ENCODE measurements at regions of chr7 and their contacts with region 1.

Region 1: GRCh38 chr7:111763221-111763801 is 201.0 kb upstream of the IMMP2L start:
- DNase-seq: no peak
- H3K4me3 ChIP-seq: no peak overlapping the region
- H3K27me3 ChIP-seq: no peaks in the 10 kb centered on the region
- CTCF ChIP-seq: peak; percentile 73

Region 2: GRCh38 chr7:111301891-111302290 is 461.4 kb before region 1 on chr7:
- CTCF ChIA-PET with region 1: no interaction called
- POLR2A ChIA-PET with region 1: no interaction called
- DNase-seq: no peak
- H3K4me3 ChIP-seq: no peak overlapping the region
- H3K27me3 ChIP-seq: no peaks in the 10 kb centered on the region
- CTCF ChIP-seq: no peak

Region 3: GRCh38 chr7:111682588-111683340 is 80.5 kb before region 1 on chr7:
- CTCF ChIA-PET with region 1: no interaction called
- POLR2A ChIA-PET with region 1: no interaction called
- DNase-seq: no peak
- H3K4me3 ChIP-seq: no peak overlapping the region
- H3K27me3 ChIP-seq: no peaks in the 10 kb centered on the region
- CTCF ChIP-seq: no peak

Region 4: DNA sequence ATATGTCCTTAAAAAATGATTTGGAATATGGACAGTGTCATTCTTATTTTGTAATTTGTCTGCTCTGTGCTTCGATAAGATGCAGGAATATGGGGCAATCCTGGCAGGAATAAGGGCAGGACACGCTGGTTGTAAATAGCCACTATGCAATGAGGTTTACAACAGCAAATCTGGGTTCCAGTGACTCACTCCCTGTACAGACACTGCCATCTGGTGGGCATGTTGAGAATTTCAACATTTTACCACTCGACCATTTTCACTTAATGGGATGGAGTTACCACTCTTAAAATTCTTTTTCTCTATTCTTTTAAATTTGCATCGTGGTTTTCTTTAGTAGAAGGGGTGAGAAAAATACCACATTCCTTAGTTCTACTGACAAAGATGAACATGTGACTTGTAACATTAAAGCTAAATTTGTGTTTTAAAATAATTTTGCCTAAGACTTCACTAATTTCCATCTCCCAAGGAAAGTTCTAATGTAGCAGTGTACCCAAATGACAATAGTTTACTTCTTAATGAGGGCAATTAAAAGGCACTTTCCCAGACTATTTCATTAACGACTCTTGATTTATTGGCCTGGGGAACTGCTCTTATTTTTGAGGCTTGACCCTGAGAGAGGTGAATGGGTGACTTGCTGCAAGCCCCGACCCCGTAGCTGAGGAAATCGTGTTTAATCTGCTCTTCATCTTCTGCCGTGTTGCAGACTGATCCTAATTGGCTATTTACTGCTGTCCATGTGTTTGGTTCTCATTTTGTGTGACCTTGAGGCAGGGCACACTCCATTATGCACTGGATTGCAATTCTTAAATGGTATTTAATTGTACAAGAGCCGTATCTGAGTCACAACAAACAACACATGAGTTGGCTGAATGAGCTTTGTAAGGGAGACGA is 27.4 kb before region 1 on chr7:
- CTCF ChIA-PET with region 1: no interaction called
- POLR2A ChIA-PET with region 1: no interaction called
- DNase-seq: no peak
- H3K4me3 ChIP-seq: no peak overlapping the region
- H3K27me3 ChIP-seq: no peaks in the 10 kb centered on the region
- CTCF ChIP-seq: peak; percentile 75

Region 5: DNA sequence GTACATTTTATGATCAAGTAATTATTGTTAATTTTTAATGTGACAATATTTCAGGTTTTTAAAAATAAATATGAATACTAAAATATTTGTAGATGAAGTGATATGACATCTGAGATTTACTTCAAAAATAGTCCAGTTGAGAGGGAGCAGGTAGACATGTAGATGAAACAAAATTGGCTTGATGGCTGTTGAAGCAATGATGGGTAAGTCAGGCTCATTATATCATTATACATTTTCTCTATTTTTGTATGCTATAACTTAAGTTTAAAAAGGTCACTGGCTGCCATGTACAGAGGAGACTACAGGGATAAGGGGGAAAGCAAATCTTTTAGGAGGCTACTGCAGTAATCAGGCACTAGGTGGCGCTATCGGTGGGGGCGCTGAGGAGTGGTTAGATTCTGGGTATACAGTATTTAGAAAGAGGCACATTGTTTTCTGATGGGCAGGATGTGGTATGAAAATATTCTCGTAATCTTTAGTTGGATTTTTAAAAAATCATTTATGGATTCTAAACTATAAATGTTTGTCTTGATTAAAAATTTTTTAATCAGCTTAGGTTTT is 11.2 kb before region 1 on chr7:
- CTCF ChIA-PET with region 1: interaction called, 15 read pairs
- POLR2A ChIA-PET with region 1: no interaction called
- DNase-seq: no peak
- H3K4me3 ChIP-seq: no peak overlapping the region
- H3K27me3 ChIP-seq: no peaks in the 10 kb centered on the region; the same call in 1 of the 2 replicates
- CTCF ChIP-seq: peak; percentile 86

Region 6: GRCh38 chr7:111780527-111780926 is 17.2 kb after region 1 on chr7:
- CTCF ChIA-PET with region 1: interaction called, 11 read pairs
- POLR2A ChIA-PET with region 1: no interaction called
- DNase-seq: no peak
- H3K4me3 ChIP-seq: no peak overlapping the region
- H3K27me3 ChIP-seq: no peaks in the 10 kb centered on the region
- CTCF ChIP-seq: no peak